ENCODE measurements at regions of chr7 and their contacts with region 1.

Region 1: DNA sequence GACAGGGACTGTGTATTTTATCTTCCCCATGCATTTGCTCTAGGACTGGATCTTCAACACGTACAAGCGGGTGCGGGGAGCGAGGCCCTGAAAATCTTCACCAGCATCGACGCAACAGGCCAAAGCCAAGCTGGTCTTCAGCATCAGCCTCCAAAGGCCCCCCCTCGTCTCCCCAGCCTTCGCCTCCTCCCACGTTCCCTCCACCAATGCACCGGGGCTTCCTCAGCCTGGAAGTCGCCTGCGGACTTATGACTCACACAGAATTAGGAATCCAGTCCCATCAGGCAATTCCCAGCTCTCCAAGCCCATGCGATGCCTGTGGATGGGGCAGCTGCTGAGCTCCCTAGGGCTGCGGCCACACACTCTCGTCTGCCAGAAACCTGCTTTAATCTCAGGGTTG is 36.3 kb upstream of the RNF32 start:
- DNase-seq: no peak
- ATAC-seq: no peak
- H3K4me3 ChIP-seq: no peak overlapping the region
- H3K27ac ChIP-seq: no peak overlapping the region
- H3K4me1 ChIP-seq: no peaks in the 10 kb centered on the region
- H3K27me3 ChIP-seq: no peaks in the 10 kb centered on the region; a peak in 1 of 4 replicates
- CTCF ChIP-seq: no peak
- EP300 ChIP-seq: no peak
- POLR2A ChIP-seq: no peak
- RAD21 ChIP-seq: no peak

Region 2: GRCh38 chr7:156592155-156592884 is 12.0 kb before region 1 on chr7:
- CTCF ChIA-PET with region 1: interaction called, 7 read pairs
- POLR2A ChIA-PET with region 1: no interaction called
- RAD21 ChIA-PET with region 1: no interaction called
- SMC1A ChIA-PET with region 1: interaction called, 12 read pairs
- in situ Hi-C with region 1: no loop called
- intact Hi-C with region 1: no loop called
- DNase-seq: no peak
- ATAC-seq: no peak
- H3K4me3 ChIP-seq: no peak overlapping the region
- H3K27ac ChIP-seq: no peak overlapping the region
- H3K4me1 ChIP-seq: no peaks in the 10 kb centered on the region
- H3K27me3 ChIP-seq: no peaks in the 10 kb centered on the region
- CTCF ChIP-seq: no peak
- EP300 ChIP-seq: no peak
- POLR2A ChIP-seq: no peak
- RAD21 ChIP-seq: no peak

Measured in GM12878 (cell line).